Posterior vena cava (tissue), 2 donors: ENCODE measurements at regions of chr9 and their contacts with region 1.

Region 1: DNA sequence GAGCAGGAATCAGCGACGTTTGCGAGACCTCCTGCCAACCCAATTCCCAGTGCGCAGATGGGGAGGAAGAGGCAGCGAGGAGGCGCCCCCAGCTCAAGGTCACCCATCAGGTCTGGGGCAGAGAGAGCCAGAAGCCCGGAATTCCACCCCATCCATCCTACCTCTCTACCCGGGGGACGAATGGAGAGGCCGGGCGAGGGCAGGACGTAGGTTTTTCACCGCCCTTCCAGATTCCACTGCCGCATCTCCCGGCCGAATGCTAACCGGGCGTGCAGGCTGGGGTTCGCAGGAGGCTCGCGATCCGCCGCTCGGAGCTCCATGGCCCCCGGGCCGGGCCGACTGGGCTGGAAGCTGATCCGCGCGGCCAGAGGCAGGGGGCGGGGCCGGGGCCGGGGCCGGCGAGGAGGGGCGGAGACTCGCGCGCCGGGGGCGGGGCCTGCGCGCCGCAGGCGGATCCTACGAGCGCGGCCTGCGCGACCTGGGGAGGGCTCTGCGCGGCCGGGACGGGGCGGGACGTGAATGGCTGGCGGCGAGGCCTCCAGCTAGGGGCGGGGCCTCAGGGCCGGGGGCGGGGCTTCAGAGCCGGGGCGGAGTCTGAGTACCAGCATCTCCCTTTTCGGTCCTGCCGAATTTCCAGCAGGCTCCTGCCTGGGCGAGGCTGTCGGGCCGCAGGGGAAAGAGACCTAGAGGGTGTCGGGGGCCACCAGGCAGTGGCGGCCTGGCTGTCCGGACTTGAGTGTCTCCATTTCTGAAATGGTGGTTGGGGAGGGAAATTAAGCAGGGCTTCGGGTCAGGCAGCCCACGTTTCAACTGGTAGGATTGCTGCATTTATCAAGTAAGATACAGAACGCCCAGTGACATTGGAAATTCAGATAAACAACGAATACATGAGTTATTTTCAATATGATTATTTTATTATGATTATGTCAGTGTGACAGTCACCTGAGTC is at the start of gene ST6GALNAC4:
- DNase-seq: peak; percentile 98
- total RNA-seq, gene ST6GALNAC4: 27.7 to 32.7 TPM

Region 2: DNA sequence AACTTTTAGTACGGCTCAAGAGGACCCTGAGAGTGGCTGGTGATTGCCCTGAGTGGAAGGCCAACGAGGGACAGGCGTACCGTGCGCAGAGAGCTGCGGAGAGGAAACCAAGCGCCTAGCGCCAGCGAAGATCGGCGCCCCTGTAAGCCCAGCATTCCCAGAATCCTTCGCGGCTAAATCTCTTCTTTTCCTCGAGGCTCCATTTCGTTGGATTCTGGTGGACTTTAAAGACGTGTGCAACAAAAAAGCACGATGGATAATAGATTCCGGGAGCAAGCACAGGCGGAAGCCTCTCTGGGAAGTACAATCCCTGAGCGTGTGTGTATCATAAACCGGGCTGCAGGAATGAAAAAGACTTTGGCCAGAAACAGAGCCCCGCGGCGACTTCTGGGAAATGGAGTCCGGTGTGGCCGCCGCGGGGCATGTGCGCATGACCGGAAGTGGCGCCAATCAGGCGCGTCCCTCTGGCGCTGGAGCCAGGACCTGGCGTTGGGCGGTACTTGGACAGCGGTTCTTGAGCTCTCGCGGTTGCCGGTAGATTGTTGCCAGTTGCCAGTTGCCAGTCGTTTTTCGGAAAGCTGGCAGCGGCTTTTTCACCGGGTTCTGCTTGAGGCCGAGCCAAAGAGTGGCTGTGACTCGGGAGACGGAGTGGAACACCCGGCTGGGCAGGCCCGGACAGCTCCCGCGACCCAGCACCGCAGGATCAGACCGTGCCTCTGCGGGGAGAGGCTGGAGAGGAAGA is 492.8 kb before region 1 on chr9 and contains the start of gene ZNF79:
- intact Hi-C with region 1: no loop called
- DNase-seq: peak; percentile 98
- total RNA-seq, gene ZNF79: 6.5 to 8.0 TPM

Region 3: GRCh38 chr9:127586537-127586936 is 330.4 kb before region 1 on chr9:
- intact Hi-C with region 1: loop called in 1 of 2 experiments (anchors 5 kb)
- DNase-seq: peak; percentile 91

Region 4: GRCh38 chr9:127611899-127612790 is 304.8 kb before region 1 on chr9 and contains the start of gene STXBP1:
- intact Hi-C with region 1: loop called in 1 of 2 experiments (anchors 1 kb)
- DNase-seq: peak; percentile 95
- total RNA-seq, gene STXBP1: 69.4 to 80.3 TPM

Region 5: GRCh38 chr9:127734747-127735529 is 182.0 kb before region 1 on chr9 and contains the start of gene TOR2A:
- intact Hi-C with region 1: loop called (anchors 2 to 10 kb)
- DNase-seq: peak; percentile 100
- total RNA-seq, gene TOR2A: 4.9 to 8.2 TPM

Region 6: DNA sequence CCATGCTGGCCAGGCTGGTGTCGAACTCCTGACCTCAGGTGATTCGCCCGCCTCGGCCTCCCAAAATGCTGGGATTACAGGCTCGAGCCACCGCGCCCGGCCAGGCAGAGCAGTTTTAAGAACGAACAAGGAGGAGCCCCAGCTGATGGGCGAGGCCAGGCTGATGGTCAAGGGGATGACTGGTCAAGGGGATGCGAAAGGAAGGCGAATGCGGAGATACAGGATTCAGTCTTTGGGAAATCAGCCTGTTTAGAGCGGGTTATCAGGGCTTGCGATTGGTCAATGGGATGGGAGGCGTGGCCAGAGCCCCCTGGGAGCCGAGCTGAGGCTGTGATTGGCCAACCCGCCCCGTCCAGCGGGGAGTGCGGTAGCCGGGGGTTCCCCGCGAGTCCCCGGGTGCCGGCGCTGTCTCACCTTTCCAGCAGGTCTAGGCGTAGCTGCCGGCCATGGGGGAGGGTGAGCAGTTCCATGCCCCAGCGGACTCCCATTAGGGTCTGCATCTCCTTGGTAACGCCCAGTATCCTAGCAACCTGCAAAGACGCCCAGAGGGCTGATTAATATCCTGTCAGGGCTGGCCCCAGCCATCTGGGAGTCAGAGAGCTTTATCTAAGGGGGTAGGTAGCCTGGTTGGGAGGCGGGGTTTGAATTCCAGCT is 174.4 kb before region 1 on chr9:
- intact Hi-C with region 1: loop called (anchors 2 to 10 kb)
- DNase-seq: no peak

Region 7: DNA sequence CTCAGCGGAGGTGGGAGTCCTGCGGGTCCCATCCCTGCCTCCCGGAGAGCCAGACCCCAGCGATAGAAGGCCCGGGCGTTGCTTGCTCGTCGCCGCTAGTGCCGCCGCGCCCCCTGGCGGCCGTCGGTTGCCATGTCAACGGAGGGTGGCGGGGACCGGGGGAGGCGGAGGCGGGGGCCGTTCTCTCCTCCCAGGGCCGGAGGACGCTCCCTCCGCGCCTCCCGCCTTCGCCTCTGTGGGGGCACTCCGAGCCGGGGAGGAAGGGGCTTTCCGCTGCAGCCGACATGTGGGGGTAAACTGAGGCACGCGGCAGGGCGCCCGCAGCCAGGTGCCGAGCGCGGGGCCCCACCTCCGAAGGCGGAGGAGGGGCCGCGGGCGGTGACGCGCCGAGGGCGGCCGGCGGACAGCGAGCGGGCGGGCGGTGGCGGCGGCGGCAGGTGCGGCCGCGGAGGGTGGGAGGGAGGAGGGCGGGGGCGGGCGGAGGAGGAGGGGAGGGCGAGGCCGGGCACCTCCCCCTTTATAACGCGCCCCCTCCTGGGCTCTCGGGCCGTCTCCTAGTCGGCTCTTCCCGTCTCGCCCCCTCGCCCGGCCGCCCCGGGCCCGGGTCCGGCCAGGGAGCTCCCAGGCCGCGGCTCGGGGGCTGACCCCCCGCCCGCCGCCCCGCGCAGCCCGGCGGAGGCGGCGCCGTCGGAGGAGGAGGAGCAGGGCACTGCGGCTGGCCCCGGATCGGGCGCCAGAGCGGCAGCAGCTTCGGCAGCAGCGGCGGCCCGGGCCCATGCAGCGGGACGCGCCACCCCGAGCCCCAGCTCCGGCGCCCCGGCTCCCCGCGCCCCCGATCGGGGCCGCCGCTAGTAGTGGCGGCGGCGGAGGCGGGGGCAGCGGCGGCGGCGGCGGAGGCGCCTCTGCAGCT is 131.7 kb before region 1 on chr9:
- intact Hi-C with region 1: loop called in 1 of 2 experiments (anchors 10 kb)
- DNase-seq: peak; percentile 96

Region 8: GRCh38 chr9:127838375-127839078 is 78.4 kb before region 1 on chr9:
- intact Hi-C with region 1: no loop called
- DNase-seq: peak; percentile 98

Region 9: DNA sequence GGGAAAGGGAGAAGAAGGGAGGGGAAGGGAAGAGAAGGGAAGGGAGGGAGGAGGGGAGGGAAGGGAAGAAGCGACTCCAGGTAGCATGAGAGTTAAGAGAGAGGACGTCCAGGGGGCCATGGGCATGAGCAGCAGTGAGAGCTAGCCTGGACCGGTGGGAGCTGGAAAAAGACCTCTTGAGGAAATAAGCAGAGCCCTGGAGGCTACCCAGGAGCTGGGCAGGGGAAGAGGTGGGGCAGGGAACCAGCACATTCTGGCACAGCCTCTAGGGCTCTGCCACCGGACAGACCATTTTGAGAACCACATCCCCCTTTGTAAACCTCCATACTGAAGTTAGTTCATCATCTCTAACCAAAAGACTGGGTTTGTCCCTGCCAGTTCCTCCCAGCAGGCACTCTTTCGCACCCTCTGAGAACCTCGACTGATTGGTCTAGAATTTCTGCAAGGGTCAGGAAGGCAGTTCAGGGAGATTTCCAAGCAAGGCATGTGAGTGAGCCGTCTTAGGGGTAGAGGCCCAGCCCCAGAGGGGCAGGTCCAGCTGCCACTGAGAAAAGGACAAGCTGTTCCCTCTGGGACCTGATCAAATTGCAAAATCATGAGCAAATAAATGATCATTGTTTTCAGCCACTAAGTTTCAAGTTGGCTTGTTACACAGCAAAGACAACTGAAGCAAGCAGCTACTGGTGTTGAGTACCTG is 138.6 kb after region 1 on chr9:
- intact Hi-C with region 1: no loop called
- DNase-seq: no peak